ENCODE measurements at regions of chr2 and their contacts with region 1.

Region 1: GRCh38 chr2:70086838-70087701 is at the start of gene PCBP1:
- DNase-seq: peak; percentile 97 to 98
- ATAC-seq: peak; percentile 85 to 93 (median 91)
- H3K4me3 ChIP-seq: peak within 1 kb of the TSS; percentile 53 to 98 (median 86)
- H3K27ac ChIP-seq: peak within 1 kb of the TSS; percentile 99 to 100 (median 100)
- H3K4me1 ChIP-seq: peaks cover 4 to 60% (median 46%) of the 10 kb centered on the region in 9 donors
- H3K27me3 ChIP-seq: no peaks in the 10 kb centered on the region
- CTCF ChIP-seq: no peak
- total RNA-seq, gene PCBP1: 197 to 275 (median 219) TPM

Region 2: DNA sequence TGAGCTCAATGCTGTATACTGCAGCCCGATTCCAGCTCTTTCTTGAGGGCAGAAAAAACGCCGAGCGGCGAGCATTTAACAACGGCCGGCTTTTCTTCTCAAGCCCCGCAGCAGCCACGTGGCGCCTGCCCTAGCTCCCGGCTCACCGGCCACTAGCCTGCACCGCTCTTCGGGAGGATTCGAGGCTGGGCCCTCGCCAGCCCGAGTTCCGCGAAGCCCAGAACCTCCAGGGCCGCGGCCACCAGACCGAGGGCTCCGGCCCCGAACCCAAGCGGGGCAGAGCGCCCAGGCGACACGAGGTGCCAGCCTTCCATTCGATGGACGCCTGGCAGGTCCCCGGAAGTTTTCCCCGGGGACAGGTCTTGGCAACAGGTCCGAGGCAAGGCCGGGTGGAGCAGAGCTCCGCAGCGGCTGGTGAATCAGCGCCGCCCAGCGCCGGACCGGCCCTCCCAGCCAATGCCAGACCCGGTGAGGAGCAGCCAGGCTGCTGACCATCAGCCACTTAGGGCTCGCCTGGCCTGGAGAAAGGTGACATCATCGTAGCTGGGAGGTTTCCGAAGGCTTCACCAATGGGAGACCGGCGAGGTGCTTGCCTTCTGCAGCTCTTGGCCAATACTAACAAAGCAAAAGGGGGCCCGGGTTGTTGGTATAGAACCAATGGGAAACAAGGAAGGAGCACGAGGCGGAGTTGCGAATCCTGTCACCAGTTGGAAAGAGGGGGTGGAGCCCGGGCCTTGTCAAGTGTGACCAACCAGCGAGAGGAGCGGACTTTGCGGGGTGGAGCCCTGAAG is 172.7 kb before region 1 on chr2:
- intact Hi-C with region 1: loop called in 5 of 10 experiments (anchors 1 to 5 kb)
- DNase-seq: peak; percentile 97 to 100
- ATAC-seq: peak; percentile 94 to 98 (median 96)
- H3K4me3 ChIP-seq: peak overlapping the region; percentile 45 to 95 (median 76)
- H3K27ac ChIP-seq: peak overlapping the region; percentile 80 to 97 (median 96)
- H3K4me1 ChIP-seq: peaks cover 0 to 59% (median 34%) of the 10 kb centered on the region in 9 donors
- H3K27me3 ChIP-seq: no peaks in the 10 kb centered on the region
- CTCF ChIP-seq: peak in 5 of 9 donors; percentile 29 to 53 (median 36)

Region 3: DNA sequence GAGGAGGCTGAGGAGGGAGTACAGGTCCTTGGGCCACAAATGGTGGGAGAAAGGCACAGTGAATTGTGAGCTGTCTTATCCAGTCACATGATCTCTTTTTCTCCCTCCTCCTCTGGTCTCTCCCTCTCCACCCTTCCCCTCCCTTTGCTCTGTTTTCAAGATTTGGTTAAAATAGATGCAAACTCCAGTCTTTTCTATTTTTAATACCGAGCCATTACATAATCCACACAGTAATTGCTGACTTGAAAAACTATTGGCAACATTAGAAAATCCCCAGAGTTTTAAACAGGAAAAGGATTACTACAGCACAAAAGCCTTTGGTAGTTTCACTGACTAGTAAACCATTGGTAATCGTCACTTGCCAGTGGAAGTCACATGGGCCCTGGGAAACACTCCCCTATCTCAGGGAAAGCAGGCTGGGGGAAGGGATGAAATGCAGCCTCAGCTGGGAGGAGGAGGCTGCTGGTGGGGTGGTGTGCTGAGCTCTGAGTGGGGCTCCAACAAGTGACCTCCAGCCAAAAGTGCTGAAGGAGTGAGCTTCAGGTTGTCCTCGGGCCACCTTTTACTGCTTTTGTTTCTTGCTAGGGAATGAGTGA is 57.2 kb before region 1 on chr2:
- intact Hi-C with region 1: no loop called
- DNase-seq: peak; percentile 35 to 87
- ATAC-seq: peak; percentile 88 to 97 (median 94)
- H3K4me3 ChIP-seq: peak overlapping the region in 1 of 10 donors; percentile 0
- H3K27ac ChIP-seq: peak overlapping the region; percentile 26 to 89 (median 82)
- H3K4me1 ChIP-seq: peaks cover 3 to 33% (median 27%) of the 10 kb centered on the region in 9 donors
- H3K27me3 ChIP-seq: no peaks in the 10 kb centered on the region
- CTCF ChIP-seq: no peak

Region 4: GRCh38 chr2:70124983-70125480 is 38.0 kb after region 1 on chr2:
- intact Hi-C with region 1: loop called in 7 of 10 experiments (anchors 2 to 5 kb)
- DNase-seq: peak; percentile 66 to 70
- ATAC-seq: peak; percentile 41 to 74 (median 66)
- H3K4me3 ChIP-seq: peak overlapping the region; percentile 33 to 82 (median 66)
- H3K27ac ChIP-seq: peak overlapping the region; percentile 92 to 100 (median 99)
- H3K4me1 ChIP-seq: peaks cover 9 to 64% (median 39%) of the 10 kb centered on the region in 9 donors
- H3K27me3 ChIP-seq: no peaks in the 10 kb centered on the region
- CTCF ChIP-seq: no peak

Region 5: GRCh38 chr2:70132244-70133126 is 45.4 kb after region 1 on chr2:
- intact Hi-C with region 1: loop called in 2 of 10 experiments (anchors 2 kb)
- DNase-seq: peak; percentile 54 to 61
- ATAC-seq: peak; percentile 71 to 81 (median 78)
- H3K4me3 ChIP-seq: peak overlapping the region in 9 of 10 donors; percentile 21 to 56 (median 40)
- H3K27ac ChIP-seq: peak overlapping the region; percentile 82 to 98 (median 92)
- H3K4me1 ChIP-seq: peaks cover 16 to 77% (median 52%) of the 10 kb centered on the region in 9 donors
- H3K27me3 ChIP-seq: no peaks in the 10 kb centered on the region
- CTCF ChIP-seq: no peak

Region 6: GRCh38 chr2:70261501-70261900 is 174.4 kb after region 1 on chr2:
- intact Hi-C with region 1: no loop called
- DNase-seq: no peak
- ATAC-seq: no peak
- H3K4me3 ChIP-seq: peak overlapping the region in 3 of 10 donors; percentile 11 to 26 (median 12)
- H3K27ac ChIP-seq: peak overlapping the region in 8 of 10 donors; percentile 22 to 96 (median 44)
- H3K4me1 ChIP-seq: peaks cover 0 to 51% (median 41%) of the 10 kb centered on the region in 9 donors
- H3K27me3 ChIP-seq: no peaks in the 10 kb centered on the region
- CTCF ChIP-seq: peak in 1 of 9 donors; percentile 10

Region 7: GRCh38 chr2:70283500-70284191 is 196.6 kb after region 1 on chr2:
- intact Hi-C with region 1: no loop called
- DNase-seq: no peak
- ATAC-seq: peak in 5 of 8 donors; percentile 33 to 50 (median 41)
- H3K4me3 ChIP-seq: no peak overlapping the region
- H3K27ac ChIP-seq: peak overlapping the region in 1 of 10 donors; percentile 54
- H3K4me1 ChIP-seq: peaks cover 0 to 28% (median 4%) of the 10 kb centered on the region in 9 donors
- H3K27me3 ChIP-seq: no peaks in the 10 kb centered on the region
- CTCF ChIP-seq: no peak

Region 8: DNA sequence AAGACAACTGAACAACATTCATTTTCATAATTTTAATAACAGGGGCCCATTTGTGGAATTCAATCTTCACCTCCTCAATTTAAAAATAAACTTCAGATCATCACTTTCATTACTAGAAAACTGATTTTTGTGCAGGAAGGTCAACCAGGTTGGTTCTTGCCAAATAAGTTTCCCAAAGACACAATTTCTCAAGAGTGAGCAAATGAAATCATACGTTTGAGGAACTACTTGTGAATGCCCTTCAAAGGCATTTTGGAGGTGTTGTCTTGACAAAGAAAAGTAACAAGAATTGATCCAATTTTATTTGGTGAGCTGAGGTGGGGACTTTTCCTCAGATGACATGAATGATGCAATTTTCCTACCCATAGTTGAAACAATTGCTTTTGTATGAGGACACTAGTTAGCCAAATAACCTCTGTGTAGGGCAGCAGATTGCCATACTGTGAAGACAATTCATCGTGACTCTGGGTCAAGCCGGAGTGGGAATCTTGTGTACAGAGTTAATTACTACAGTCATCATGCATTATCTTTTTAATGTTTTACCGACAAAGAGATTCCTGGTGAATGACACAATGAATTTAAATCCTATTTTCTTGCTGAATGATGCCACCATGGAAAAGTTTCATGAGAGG is 344.8 kb after region 1 on chr2:
- intact Hi-C with region 1: no loop called
- DNase-seq: no peak
- ATAC-seq: no peak
- H3K4me3 ChIP-seq: no peak overlapping the region
- H3K27ac ChIP-seq: no peak overlapping the region
- H3K4me1 ChIP-seq: no peaks in the 10 kb centered on the region
- H3K27me3 ChIP-seq: no peaks in the 10 kb centered on the region
- CTCF ChIP-seq: no peak

Measured in heart right ventricle (tissue), 16 donors.